A673 (cell line): ENCODE measurements at regions of chr15 and their contacts with region 1.

Region 1: DNA sequence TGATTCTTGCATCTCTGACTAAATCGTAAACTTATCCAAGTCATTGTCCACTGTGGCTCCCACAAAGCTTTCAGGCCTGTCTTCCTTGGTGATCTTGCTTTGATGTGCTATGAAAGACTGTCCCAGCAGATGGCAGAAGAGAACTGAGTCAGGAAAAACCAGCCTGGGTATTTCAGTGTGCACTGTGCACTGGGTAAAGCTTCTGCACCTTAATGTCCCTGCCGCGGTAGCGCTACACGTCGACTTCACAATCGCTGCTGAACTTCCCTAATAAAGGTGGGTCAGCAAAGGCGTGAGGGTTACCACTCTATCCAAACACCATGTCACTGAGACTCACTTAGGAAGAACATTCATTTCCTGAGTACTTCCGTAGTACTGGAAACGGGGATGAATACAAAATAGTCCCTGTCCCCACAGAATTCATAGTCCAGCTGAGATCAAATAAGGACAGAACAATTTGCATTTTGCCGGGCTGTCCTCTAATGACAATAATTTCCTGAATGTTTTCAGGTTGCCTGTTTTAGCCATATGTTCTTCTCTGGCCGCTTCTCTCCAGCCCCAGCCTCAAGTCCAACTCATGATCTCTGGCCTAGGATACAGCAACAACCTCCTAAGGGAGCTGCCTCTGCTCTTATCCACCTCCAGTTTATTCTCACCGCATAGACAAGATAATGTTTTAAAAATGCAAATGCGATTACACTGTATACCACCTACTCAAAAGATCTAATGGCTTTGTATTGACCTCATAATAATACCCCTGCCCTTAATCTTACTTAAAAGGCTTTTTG is 83.6 kb upstream of the AKAP13 start:
- DNase-seq: peak; percentile 85
- H3K4me3 ChIP-seq: peak overlapping the region; percentile 24
- H3K27ac ChIP-seq: no peak overlapping the region
- H3K4me1 ChIP-seq: peaks cover 8% of the 10 kb centered on the region
- H3K27me3 ChIP-seq: no peaks in the 10 kb centered on the region
- CTCF ChIP-seq: peak; percentile 79

Region 2: GRCh38 chr15:84588053-84588874 is 708.5 kb before region 1 on chr15:
- CTCF ChIA-PET with region 1: no interaction called
- POLR2A ChIA-PET with region 1: no interaction called
- intact Hi-C with region 1: loop called (anchors 10 kb)
- DNase-seq: peak; percentile 91
- H3K4me3 ChIP-seq: peak overlapping the region; percentile 39
- H3K27ac ChIP-seq: no peak overlapping the region
- H3K4me1 ChIP-seq: peaks cover 12% of the 10 kb centered on the region
- H3K27me3 ChIP-seq: no peaks in the 10 kb centered on the region
- CTCF ChIP-seq: peak; percentile 70

Region 3: DNA sequence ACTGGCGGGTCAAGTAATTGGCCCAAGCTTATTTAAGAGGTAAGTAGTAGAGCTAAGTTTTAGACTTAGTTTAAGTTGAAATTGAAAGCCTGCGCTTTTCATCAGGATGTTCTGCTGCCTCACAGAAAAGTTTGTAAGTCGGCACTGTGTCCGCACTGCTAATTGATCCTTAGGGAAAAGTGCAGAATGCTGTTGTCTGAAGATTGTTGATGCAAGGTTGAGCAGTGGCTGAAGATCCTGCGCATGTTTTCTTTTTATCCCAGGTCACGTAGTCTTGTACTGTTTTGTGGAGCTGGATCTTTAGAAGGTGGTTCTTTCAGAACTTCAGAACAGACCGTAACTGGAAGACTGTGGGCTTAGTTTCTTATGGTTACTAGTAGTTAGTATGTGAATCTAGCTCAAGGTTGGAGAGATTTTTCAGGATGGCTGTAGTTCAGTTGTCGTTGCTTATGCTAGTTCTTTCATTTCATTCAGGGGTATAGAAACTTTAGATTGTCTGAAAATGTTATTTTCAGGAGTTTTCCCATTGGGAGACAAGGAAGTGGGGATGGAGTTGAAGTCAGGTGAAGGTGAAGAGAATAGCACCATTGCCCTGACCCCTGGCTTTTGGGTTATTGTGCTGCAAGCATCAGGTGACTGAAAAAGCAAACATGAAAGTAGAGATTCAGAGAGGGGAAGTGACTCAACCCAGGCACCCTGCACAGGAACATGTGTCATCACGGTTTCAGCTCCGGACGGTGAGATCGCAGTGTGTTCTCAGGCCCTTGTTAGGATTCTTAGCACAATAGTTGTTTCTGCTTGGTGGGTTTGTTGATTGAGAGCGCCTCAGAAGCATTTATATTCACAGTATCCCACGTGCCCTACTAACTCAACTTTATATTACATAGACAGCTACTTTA is 116.4 kb after region 1 on chr15:
- CTCF ChIA-PET with region 1: interaction called, 17 read pairs
- POLR2A ChIA-PET with region 1: no interaction called
- intact Hi-C with region 1: loop called (anchors 2 kb)
- DNase-seq: peak; percentile 74
- H3K4me3 ChIP-seq: no peak overlapping the region
- H3K27ac ChIP-seq: peak overlapping the region; percentile 41
- H3K4me1 ChIP-seq: peaks cover 44% of the 10 kb centered on the region
- H3K27me3 ChIP-seq: no peaks in the 10 kb centered on the region
- CTCF ChIP-seq: no peak

Region 4: DNA sequence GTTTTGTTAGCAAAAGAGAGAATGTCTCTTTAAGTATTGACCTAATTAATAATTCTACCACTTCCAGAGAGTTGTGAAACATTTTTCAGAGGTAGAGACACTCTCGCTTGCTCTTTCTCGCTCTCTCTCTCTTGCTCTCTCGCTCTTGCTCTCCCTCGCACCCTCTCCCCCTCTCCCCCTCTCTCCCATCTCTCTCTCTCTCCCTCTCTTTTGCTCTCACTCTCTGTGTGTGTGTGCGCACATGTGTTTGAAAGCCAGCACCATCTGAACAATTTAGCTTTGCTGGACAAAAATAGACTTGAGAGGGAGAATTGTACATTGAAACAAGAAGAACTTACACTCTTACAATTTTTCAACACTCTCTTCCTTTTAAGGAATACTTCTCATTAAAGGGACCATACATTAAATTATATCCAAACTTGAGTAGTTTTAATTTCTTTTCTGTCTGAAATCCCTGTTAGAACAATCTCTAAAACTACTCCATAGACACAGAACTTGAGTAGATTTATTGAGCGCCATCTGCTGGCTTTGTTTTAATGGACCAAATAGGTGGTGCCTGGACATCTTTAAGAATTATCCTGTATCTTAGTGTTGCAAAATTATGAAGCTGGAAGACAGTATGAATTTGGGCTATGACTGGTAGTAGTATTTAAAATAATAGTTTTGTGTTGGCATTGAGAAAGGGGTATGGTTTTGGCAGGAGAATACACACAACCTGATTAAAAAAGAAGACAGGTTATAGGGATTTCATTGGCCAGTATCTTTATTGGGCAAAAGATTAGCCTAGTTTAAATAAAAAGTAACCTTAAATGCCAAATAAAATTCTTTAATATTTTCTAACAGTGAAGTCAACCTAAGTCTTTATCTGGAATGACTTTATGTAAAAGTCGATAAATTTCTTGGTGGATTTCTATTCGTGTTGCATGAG is 208.2 kb after region 1 on chr15:
- CTCF ChIA-PET with region 1: interaction called, 5 read pairs
- POLR2A ChIA-PET with region 1: no interaction called
- intact Hi-C with region 1: loop called (anchors 2 kb)
- DNase-seq: peak; percentile 70
- H3K4me3 ChIP-seq: no peak overlapping the region
- H3K27ac ChIP-seq: no peak overlapping the region
- H3K4me1 ChIP-seq: peaks cover 16% of the 10 kb centered on the region
- H3K27me3 ChIP-seq: no peaks in the 10 kb centered on the region
- CTCF ChIP-seq: peak; percentile 81

Region 5: GRCh38 chr15:85730001-85730820 is 433.4 kb after region 1 on chr15:
- CTCF ChIA-PET with region 1: interaction called, 4 read pairs
- POLR2A ChIA-PET with region 1: no interaction called
- intact Hi-C with region 1: loop called (anchors 5 kb)
- DNase-seq: peak; percentile 75
- H3K4me3 ChIP-seq: no peak overlapping the region
- H3K27ac ChIP-seq: no peak overlapping the region
- H3K4me1 ChIP-seq: no peaks in the 10 kb centered on the region
- H3K27me3 ChIP-seq: no peaks in the 10 kb centered on the region
- CTCF ChIP-seq: peak; percentile 74

Region 6: GRCh38 chr15:85840065-85840801 is 543.4 kb after region 1 on chr15:
- CTCF ChIA-PET with region 1: interaction called, 3 read pairs
- POLR2A ChIA-PET with region 1: no interaction called
- intact Hi-C with region 1: loop called (anchors 2 kb)
- DNase-seq: peak; percentile 80
- H3K4me3 ChIP-seq: peak overlapping the region; percentile 43
- H3K27ac ChIP-seq: no peak overlapping the region
- H3K4me1 ChIP-seq: no peaks in the 10 kb centered on the region
- H3K27me3 ChIP-seq: no peaks in the 10 kb centered on the region
- CTCF ChIP-seq: peak; percentile 97